ENCODE measurements at regions of chr11 and their contacts with region 1.

Region 1: GRCh38 chr11:69010964-69011623 is 2.0 kb downstream of the MRGPRF start:
- DNase-seq: no peak
- H3K4me3 ChIP-seq: peak overlapping the region; percentile 76
- H3K27ac ChIP-seq: peak overlapping the region; percentile 77
- H3K27me3 ChIP-seq: no peaks in the 10 kb centered on the region
- CTCF ChIP-seq: no peak

Region 2: DNA sequence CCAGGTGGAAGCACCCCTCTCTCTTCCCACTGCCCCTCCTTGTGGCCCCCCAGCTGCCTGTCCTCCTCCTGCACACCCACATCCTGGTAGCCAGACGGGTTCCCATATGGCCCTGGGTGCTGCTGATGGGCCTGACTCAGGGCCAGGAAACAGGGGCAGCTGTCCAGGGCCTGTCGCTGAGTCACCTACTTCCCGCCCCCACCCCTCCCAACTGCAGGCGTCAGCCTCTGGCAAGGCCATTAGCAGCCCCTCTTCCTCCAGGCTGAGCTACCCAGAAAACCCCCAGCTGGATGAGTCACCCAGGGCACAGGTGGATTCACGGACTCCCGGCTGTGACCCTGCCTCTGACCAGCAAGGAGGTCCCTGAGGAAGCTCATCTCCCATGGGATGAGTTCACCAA is 333.7 kb before region 1 on chr11:
- CTCF ChIA-PET with region 1: no interaction called
- POLR2A ChIA-PET with region 1: interaction called, 12 read pairs
- DNase-seq: peak; percentile 83
- H3K4me3 ChIP-seq: no peak overlapping the region
- H3K27ac ChIP-seq: no peak overlapping the region
- H3K27me3 ChIP-seq: no peaks in the 10 kb centered on the region
- CTCF ChIP-seq: no peak

Region 3: DNA sequence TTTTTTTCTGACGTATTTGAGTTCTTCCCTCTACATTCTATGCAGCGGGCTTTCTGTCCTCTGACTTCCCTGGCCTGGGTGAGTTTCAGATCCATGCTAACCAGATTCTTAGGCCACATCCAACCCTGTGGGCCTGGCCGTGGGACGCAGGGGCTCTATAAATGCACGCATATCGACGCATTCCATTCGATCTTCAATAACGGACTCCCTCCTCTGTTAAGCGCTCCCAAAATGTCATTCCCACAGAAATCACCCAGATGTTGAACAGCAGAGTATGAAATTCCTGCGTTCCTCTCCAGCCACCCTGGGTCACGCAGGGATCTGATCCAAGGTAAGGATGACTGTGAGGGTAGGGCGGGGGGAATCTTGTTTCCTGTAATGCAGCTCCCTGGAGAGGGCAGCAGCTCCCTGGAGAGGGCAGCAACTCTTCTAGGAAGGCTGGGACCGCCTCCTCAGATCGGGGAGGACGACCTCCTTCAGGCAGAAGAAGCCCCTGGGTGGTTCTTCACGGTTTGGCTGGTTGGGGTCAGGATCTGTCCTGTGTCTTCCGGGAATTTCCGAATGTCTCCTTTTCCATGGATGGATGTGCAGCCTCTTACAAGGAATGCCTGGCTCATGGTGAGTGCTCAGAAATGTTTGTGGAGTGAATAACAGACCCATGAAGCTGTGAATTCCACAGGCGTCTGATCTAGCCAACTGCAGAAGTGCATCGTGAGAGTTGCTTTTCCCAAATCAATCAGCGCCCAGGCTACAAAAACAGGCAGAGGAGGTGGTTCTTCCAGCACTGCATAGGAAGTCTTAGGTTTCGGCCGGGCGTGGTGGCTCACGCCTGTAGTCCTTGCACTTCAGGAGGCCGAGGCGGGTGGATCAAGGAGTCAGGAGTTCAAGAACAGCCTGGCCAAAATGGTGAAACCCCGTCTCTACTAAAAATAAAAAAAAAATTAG is 42.5 kb before region 1 on chr11:
- CTCF ChIA-PET with region 1: no interaction called
- POLR2A ChIA-PET with region 1: no interaction called
- DNase-seq: no peak
- H3K4me3 ChIP-seq: no peak overlapping the region
- H3K27ac ChIP-seq: no peak overlapping the region
- H3K27me3 ChIP-seq: peaks cover 42% of the 10 kb centered on the region
- CTCF ChIP-seq: no peak

Region 4: GRCh38 chr11:68983801-68984200 is 27.3 kb before region 1 on chr11:
- CTCF ChIA-PET with region 1: no interaction called
- POLR2A ChIA-PET with region 1: no interaction called
- DNase-seq: no peak
- H3K4me3 ChIP-seq: no peak overlapping the region
- H3K27ac ChIP-seq: no peak overlapping the region
- H3K27me3 ChIP-seq: peaks cover 25% of the 10 kb centered on the region
- CTCF ChIP-seq: no peak

Region 5: DNA sequence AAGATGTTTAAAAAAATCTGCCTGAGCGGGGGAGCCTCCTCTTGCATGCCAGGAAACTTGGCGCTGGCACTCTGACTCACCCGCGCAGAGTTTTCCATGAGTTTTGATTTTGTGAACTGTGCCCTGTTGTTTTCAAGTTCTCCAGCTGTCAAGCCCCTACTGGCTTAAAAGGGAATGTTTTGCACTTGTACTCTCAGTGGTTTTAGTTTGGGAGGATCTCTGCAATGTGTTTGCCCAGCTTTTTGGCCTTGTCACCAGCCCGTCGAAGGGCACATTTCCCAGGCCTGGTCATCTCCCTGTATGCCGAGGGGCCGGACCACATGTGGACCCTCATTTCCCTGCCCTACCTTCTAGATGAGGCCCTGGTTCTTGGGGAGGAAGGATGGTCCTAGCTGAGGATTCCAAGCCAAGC is 10.3 kb before region 1 on chr11:
- CTCF ChIA-PET with region 1: interaction called, 6 read pairs
- POLR2A ChIA-PET with region 1: interaction called, 27 read pairs
- DNase-seq: no peak
- H3K4me3 ChIP-seq: no peak overlapping the region
- H3K27ac ChIP-seq: peak overlapping the region; percentile 68
- H3K27me3 ChIP-seq: no peaks in the 10 kb centered on the region
- CTCF ChIP-seq: peak; percentile 76

Region 6: DNA sequence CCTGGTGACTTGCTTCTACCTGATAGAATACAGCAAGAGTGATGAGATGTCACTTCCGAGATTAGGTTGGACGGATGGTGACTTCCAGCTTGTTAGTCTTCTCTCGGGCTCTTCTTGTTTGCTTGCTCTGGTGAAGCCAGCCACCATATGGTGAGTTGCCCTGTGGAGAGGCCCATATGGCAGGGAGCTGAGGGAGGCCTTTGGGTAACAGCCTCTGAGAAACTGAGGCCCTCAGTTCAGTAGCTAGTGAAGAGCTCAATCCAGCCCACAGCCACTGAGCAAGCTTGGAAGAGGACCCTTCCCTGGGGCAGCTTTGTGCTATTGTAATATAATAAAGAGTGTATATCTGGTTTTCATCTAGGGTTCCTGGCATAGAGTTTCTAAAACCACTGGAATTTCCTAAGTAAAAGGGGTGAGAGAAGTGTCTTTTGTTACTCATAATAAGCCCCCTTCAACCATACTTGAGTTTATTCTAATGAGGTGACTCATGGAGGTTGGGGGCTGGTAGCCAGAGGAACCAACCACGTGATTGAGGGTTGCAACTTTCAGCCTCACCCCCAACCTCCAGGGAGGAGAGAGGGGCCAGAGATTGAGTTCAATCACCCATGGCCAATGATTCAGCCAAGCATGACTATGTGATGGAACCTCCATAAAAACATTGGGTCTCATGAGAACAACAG is 29.6 kb after region 1 on chr11:
- CTCF ChIA-PET with region 1: interaction called, 19 read pairs
- POLR2A ChIA-PET with region 1: interaction called, 9 read pairs
- DNase-seq: peak; percentile 62
- H3K4me3 ChIP-seq: no peak overlapping the region
- H3K27ac ChIP-seq: peak overlapping the region; percentile 86
- H3K27me3 ChIP-seq: no peaks in the 10 kb centered on the region
- CTCF ChIP-seq: no peak

Region 7: GRCh38 chr11:69048718-69049489 is 37.8 kb after region 1 on chr11 and contains the start of gene TPCN2:
- CTCF ChIA-PET with region 1: interaction called, 19 read pairs
- POLR2A ChIA-PET with region 1: interaction called, 15 read pairs
- DNase-seq: peak; percentile 92
- H3K4me3 ChIP-seq: peak within 1 kb of the TSS; percentile 81
- H3K27ac ChIP-seq: no peak within 1 kb of the TSS
- H3K27me3 ChIP-seq: no peaks in the 10 kb centered on the region
- CTCF ChIP-seq: no peak
- polyA plus RNA-seq, gene TPCN2: 6.4 and 7.4 TPM in 2 replicates

Region 8: DNA sequence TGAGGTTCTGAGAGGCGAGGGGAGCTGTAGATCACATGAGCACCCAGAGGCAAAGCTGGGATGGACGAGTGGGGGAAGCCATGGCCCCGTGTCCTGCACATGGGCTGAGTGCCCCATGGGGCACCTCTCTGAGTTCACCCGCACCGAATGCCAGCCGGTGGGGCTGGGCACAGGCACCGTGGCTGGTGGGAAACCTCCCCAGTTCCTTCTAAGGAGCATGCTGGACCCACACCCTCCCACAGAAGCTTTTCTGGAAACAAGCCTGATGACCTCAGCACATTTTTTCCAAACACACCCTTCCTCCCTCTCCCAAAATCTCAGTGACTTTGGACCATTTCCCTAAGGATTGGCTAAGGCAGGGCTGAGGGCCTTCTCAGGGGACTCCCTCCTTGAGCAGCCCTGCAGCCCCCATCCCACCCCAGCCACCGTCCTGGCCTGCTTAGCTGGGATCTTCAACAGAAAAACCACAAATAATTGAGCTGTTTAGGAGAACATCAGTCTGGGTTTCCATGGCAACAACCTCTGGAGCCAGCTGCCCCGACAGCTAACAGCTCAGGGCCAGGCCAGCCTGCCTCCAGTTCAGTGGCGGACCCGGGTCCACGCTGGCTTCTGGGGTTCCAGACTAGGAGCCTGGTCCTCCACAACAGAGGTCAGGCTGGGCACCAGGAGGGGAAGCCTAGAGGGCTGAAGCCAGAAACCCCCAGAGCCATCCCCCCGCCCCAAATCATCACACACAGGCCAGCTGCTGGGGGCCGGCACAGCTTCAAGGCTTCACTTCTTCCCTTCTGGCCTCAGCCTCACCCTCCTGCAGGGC is 452.3 kb after region 1 on chr11:
- CTCF ChIA-PET with region 1: no interaction called
- POLR2A ChIA-PET with region 1: no interaction called
- DNase-seq: peak; percentile 55
- H3K4me3 ChIP-seq: no peak overlapping the region
- H3K27ac ChIP-seq: peak overlapping the region; percentile 47
- H3K27me3 ChIP-seq: no peaks in the 10 kb centered on the region
- CTCF ChIP-seq: no peak